ENCODE measurements at regions of chr15 and their contacts with region 1.

Region 1: DNA sequence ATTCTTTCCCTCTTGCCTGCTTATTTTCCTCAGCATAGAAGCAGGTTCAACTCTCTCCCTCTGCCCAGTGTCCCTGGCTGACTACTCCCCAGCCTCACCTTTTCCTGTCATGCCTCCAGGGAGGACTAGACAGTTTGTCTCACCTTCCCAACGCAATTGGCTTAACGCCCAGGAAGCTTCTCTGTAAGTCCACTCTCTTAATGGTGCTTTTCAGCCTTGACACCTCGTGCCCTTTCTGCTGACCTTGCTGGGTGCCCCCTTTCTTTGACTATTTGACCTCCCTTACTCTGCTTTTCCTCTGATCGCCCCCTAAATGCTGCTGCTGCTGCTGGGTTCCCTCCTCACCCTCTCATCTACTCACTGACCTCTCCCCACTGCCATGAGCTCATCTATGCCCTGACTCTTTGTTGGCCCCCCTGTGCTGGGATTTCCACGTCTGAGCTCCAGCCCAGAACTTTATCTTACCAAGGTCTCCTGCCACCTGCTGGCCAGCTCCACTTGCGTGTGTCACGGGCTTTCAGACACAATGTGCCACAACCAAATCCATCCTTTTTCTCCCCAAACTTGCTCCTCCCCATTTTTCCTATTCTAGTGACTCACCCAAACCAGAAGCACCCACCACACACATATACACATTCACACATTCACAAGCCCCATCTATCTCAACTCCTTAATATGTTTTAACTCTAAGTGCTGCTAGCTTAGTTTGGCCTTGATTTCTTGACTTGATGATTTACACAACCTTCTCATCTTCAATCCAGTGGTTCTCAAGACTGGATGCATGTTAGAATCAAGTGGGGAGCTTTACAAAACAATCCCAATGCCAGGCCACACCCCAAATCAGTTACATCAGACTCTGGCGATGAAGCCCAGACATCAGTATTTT is 16.6 kb downstream of the EPB42 start:
- DNase-seq: peak; percentile 67
- ATAC-seq: peak; percentile 64
- H3K4me3 Mint-ChIP-seq: no peak overlapping the region
- H3K27ac Mint-ChIP-seq: no peak overlapping the region
- H3K4me1 Mint-ChIP-seq: peaks cover 5% of the 10 kb centered on the region
- H3K27me3 Mint-ChIP-seq: no peaks in the 10 kb centered on the region; the same call in 1 of the 2 replicates
- CTCF ChIP-seq: peak; percentile 47; the same call in 1 of the 2 replicates

Region 2: GRCh38 chr15:43150191-43150929 is 53.9 kb before region 1 on chr15:
- CTCF ChIA-PET with region 1: no interaction called
- POLR2A ChIA-PET with region 1: no interaction called
- DNase-seq: no peak
- ATAC-seq: 0 out of 2 replicates have a peak, but pooled peaks have one; percentile 32
- H3K4me3 Mint-ChIP-seq: no peak overlapping the region
- H3K27ac Mint-ChIP-seq: no peak overlapping the region; the same call in 1 of the 2 replicates
- H3K4me1 Mint-ChIP-seq: 0 out of 2 replicates have a peak, but pooled peaks cover 3% of the 10 kb centered on the region
- H3K27me3 Mint-ChIP-seq: no peaks in the 10 kb centered on the region
- CTCF ChIP-seq: no peak

Region 3: GRCh38 chr15:43185157-43186017 is 18.9 kb before region 1 on chr15 and contains the start of gene CCNDBP1:
- CTCF ChIA-PET with region 1: interaction called, 13 read pairs
- POLR2A ChIA-PET with region 1: no interaction called
- DNase-seq: peak; percentile 99
- ATAC-seq: peak; percentile 96
- H3K4me3 Mint-ChIP-seq: peak within 1 kb of the TSS; percentile 96
- H3K27ac Mint-ChIP-seq: peak within 1 kb of the TSS; percentile 90
- H3K4me1 Mint-ChIP-seq: peaks cover 13% of the 10 kb centered on the region
- H3K27me3 Mint-ChIP-seq: no peaks in the 10 kb centered on the region
- CTCF ChIP-seq: no peak; the same call in 1 of the 2 replicates
- total RNA-seq, gene CCNDBP1: 19.1 to 22.0 TPM (median 20.4 TPM) in 3 replicates

Region 4: GRCh38 chr15:43268111-43269105 is 64.1 kb after region 1 on chr15:
- CTCF ChIA-PET with region 1: interaction called, 25 read pairs
- POLR2A ChIA-PET with region 1: no interaction called
- DNase-seq: peak; percentile 75
- ATAC-seq: peak; percentile 88
- H3K4me3 Mint-ChIP-seq: no peak overlapping the region
- H3K27ac Mint-ChIP-seq: no peak overlapping the region
- H3K4me1 Mint-ChIP-seq: no peaks in the 10 kb centered on the region
- H3K27me3 Mint-ChIP-seq: peaks cover 3% of the 10 kb centered on the region; the same call in 1 of the 2 replicates
- CTCF ChIP-seq: no peak

Region 5: DNA sequence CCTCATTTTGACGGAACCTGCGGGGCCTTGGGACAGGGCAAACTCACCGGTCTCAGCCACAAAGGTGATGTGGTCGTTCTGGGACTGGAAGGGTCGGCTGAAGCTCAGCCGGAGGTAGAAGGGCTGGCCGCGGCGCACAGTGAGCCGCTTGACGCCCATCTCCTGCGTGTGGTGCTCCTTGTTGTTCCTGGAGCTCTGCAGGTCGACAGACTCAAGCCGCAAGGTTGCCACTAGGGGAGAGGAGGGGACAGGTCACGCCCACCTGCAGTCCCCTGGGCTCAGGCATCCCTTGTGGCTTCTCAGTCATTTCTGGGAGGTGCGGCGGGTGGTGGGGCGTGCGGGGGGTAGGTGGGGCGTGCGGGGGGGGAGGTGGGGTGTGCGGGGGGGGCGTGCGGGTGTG is 89.1 kb after region 1 on chr15:
- CTCF ChIA-PET with region 1: interaction called, 14 read pairs
- POLR2A ChIA-PET with region 1: no interaction called
- DNase-seq: peak; percentile 67
- ATAC-seq: peak; percentile 95
- H3K4me3 Mint-ChIP-seq: peak overlapping the region; percentile 61
- H3K27ac Mint-ChIP-seq: no peak overlapping the region
- H3K4me1 Mint-ChIP-seq: peaks cover 25% of the 10 kb centered on the region
- H3K27me3 Mint-ChIP-seq: peaks cover 8% of the 10 kb centered on the region
- CTCF ChIP-seq: no peak

Region 6: GRCh38 chr15:43316016-43316970 is 112.0 kb after region 1 on chr15:
- CTCF ChIA-PET with region 1: no interaction called
- POLR2A ChIA-PET with region 1: no interaction called
- DNase-seq: no peak
- ATAC-seq: no peak
- H3K4me3 Mint-ChIP-seq: no peak overlapping the region
- H3K27ac Mint-ChIP-seq: no peak overlapping the region
- H3K4me1 Mint-ChIP-seq: 0 out of 2 replicates have a peak, but pooled peaks cover 6% of the 10 kb centered on the region
- H3K27me3 Mint-ChIP-seq: peaks cover 17% of the 10 kb centered on the region
- CTCF ChIP-seq: no peak

Measured in WTC11 (cell line).